Left ventricle myocardium superior (tissue), 1 donor: ENCODE measurements at regions of chr15 and their contacts with region 1.

Region 1: DNA sequence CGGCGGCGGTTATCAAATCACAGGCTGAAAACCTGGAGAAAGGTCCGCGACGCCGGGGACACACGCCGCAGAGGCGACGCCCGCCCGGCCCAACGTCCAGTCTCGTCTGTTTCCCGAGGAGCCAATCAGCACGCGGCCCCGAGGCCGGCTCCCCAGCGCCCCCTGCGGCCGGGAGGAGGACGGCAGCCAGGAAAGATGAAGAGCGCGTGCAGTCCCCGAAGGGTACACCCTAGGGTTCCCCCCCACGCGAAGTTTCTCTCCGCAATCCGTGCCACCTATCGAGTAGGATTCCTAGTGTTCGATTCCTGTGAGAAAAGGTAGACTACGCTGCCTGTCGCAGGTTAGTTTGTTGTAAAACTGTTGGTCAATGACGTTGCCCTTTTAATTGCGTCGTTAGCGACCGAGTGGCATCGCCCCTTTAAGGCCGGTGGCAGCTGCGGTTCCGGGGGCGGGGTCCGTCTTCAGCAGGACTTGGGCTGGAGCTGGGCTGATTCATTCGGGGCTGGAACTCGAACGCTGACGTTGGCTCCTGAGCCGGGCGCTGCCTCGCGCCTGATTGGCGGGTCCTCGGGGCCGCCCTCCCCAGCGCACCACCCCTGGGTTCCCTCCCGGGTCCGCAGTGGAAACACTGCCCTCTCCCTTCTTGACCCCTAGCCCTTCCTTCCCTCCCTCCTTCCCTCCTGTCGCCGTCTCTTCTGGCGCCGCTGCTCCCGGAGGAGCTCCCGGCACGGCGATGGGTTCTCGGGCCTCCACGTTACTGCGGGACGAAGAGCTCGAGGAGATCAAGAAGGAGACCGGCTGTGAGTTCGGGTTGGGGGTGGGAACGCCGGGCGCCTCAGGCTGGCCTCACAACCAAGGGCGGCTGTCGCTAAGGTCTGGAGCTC is at the starts of genes CHP1 and EXD1:
- DNase-seq: peak; percentile 99
- ATAC-seq: peak; percentile 100
- total RNA-seq, gene CHP1: 102 TPM
- total RNA-seq, gene EXD1: not detected

Region 2: GRCh38 chr15:41116116-41116871 is 114.6 kb before region 1 on chr15 and contains the start of gene INO80:
- intact Hi-C with region 1: loop called (anchors 5 kb)
- DNase-seq: peak; percentile 97
- ATAC-seq: peak; percentile 96
- total RNA-seq, gene INO80: 10.6 TPM

Region 3: GRCh38 chr15:41340188-41340695 is 109.3 kb after region 1 on chr15:
- intact Hi-C with region 1: no loop called
- DNase-seq: no peak
- ATAC-seq: no peak